ENCODE measurements at regions of chr1 and their contacts with region 1.

Region 1: GRCh38 chr1:147890177-147890790 is 12.3 kb upstream of the GJA8 start:
- DNase-seq: peak; percentile 95
- H3K4me3 Mint-ChIP-seq: no peak overlapping the region
- H3K27ac Mint-ChIP-seq: no peak overlapping the region
- H3K4me1 Mint-ChIP-seq: peaks cover 14% of the 10 kb centered on the region
- H3K27me3 Mint-ChIP-seq: no peaks in the 10 kb centered on the region
- CTCF ChIP-seq: peak; percentile 93

Region 2: DNA sequence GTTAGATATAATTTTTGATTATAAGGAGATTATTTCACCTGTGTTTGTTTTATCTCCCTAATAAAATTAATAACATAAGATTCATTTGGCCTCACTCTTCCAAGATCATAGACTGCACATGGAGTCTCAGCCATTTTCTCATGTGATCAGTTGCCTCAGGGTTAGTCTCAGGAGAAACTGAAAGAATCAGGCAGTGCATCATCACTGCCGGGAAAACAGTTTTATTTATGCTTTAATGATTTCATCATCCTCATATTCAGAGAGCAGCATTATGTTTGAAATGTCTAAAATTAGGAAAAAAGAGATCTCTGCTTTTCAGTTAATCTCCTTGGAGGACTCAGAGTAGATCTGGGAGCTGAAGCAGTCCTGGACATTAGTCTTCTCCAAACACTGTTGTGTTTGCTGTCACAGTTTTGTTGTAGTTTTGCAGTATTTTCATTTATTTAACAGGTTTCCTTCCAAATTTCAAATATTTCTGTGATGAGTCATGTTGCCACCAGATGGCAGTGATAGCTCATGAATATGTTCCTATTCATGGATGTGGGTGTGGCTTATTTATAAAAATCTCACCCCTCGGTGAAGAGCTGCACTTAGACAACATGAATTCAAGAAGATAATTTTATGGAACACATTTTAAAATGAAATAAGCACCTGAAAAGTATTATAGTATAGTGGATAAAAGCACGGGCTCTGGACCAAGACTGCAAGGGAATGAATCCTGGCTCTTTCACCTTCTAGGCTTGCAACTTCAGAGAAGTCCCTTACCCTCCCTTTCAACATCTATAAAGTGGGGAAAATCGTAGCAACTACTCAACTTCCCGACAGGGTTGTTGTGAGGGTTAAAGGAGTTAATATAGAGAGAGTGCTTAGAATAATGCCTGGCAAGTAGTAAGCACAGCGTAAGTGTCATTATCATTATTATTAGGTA is 616.6 kb before region 1 on chr1:
- CTCF ChIA-PET with region 1: interaction called, 12 read pairs
- intact Hi-C with region 1: loop called (anchors 2 kb)
- DNase-seq: peak; percentile 43
- H3K4me3 Mint-ChIP-seq: no peak overlapping the region
- H3K27ac Mint-ChIP-seq: no peak overlapping the region
- H3K4me1 Mint-ChIP-seq: peaks cover 9% of the 10 kb centered on the region
- H3K27me3 Mint-ChIP-seq: no peaks in the 10 kb centered on the region
- CTCF ChIP-seq: no peak

Region 3: DNA sequence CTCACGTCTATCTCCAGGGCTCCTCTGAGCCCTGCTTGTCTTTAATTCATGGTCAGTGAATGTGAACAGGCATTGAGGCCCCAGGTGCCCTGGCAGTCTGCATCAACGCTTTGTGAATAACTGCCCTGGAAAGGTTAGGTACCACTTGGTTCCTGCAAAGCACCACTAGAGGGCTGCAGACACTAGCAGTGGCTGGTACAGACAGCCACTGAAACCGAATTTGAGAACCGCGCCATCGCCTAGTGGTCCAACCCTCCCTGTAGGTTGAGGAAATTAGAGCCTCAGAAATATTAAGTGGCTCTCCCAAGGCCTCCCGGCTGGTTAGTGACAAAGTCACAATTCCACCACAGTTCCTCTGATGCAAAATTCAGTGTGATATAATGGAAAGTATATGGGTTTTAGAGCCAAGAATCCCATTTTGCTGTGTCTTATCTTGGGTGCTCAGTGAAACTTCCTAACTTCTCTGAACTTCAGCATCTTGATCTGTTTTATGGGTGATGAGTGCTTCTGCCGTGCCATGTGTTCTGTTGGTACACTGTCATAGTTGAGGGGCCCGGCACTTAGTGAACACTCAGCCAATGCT is 395.2 kb before region 1 on chr1:
- CTCF ChIA-PET with region 1: interaction called, 6 read pairs
- intact Hi-C with region 1: loop called (anchors 1 kb)
- DNase-seq: peak; percentile 78
- H3K4me3 Mint-ChIP-seq: no peak overlapping the region
- H3K27ac Mint-ChIP-seq: no peak overlapping the region
- H3K4me1 Mint-ChIP-seq: no peaks in the 10 kb centered on the region
- H3K27me3 Mint-ChIP-seq: no peaks in the 10 kb centered on the region
- CTCF ChIP-seq: peak; percentile 84

Region 4: GRCh38 chr1:147515046-147515869 is 375.0 kb before region 1 on chr1:
- CTCF ChIA-PET with region 1: no interaction called
- intact Hi-C with region 1: loop called (anchors 1 kb)
- DNase-seq: peak; percentile 73
- H3K4me3 Mint-ChIP-seq: no peak overlapping the region
- H3K27ac Mint-ChIP-seq: peak overlapping the region; percentile 4
- H3K4me1 Mint-ChIP-seq: peaks cover 23% of the 10 kb centered on the region
- H3K27me3 Mint-ChIP-seq: no peaks in the 10 kb centered on the region
- CTCF ChIP-seq: peak; percentile 25

Region 5: GRCh38 chr1:147640553-147641165 is 249.6 kb before region 1 on chr1:
- CTCF ChIA-PET with region 1: interaction called, 8 read pairs
- intact Hi-C with region 1: loop called (anchors 1 kb)
- DNase-seq: peak; percentile 93
- H3K4me3 Mint-ChIP-seq: no peak overlapping the region
- H3K27ac Mint-ChIP-seq: no peak overlapping the region
- H3K4me1 Mint-ChIP-seq: peaks cover 20% of the 10 kb centered on the region
- H3K27me3 Mint-ChIP-seq: no peaks in the 10 kb centered on the region
- CTCF ChIP-seq: peak; percentile 95

Region 6: GRCh38 chr1:147717063-147717565 is 173.2 kb before region 1 on chr1:
- CTCF ChIA-PET with region 1: interaction called, 29 read pairs
- intact Hi-C with region 1: no loop called
- DNase-seq: peak; percentile 89
- H3K4me3 Mint-ChIP-seq: peak overlapping the region; percentile 51
- H3K27ac Mint-ChIP-seq: peak overlapping the region; percentile 99
- H3K4me1 Mint-ChIP-seq: peaks cover 70% of the 10 kb centered on the region
- H3K27me3 Mint-ChIP-seq: no peaks in the 10 kb centered on the region
- CTCF ChIP-seq: no peak

Region 7: DNA sequence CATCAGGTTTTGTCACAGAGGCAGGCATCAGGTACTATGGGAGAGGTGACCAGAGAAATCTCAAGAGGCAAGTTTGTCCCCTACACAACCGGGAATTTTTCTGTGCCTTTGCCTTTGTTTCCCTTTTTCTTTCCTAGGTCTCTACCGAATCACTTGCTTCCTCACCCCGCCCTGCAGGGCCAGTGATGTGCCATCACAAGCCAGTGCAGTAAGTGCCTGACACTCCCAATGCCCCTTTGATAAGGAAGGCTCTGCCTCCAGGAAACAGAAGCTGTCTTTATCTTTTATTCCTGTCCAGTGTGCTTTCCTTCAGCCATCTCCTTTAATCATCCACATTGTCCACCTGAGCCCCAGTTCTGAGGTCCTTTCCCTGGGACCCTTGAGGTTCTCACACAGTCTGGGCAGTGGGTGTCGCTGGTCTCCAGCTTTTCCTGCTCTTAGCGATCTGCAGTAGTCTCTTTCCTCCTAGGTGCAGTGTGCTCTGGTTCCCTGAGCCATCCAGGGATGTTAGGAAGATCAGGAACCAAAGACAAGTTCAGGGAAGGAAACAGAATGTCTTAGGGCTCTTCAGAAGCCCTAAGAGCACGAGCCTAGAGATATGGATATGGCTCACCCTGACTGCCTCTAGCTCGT is 166.5 kb before region 1 on chr1:
- CTCF ChIA-PET with region 1: interaction called, 29 read pairs
- intact Hi-C with region 1: loop called (anchors 1 kb)
- DNase-seq: peak; percentile 74
- H3K4me3 Mint-ChIP-seq: no peak overlapping the region
- H3K27ac Mint-ChIP-seq: peak overlapping the region; percentile 1
- H3K4me1 Mint-ChIP-seq: peaks cover 47% of the 10 kb centered on the region
- H3K27me3 Mint-ChIP-seq: no peaks in the 10 kb centered on the region
- CTCF ChIP-seq: no peak